A673 (cell line): ENCODE measurements at regions of chr12 and their contacts with region 1.

Region 1: GRCh38 chr12:94525951-94526350 is 66.3 kb upstream of the CEP83 start:
- DNase-seq: no peak
- H3K4me3 ChIP-seq: no peak overlapping the region
- H3K27ac ChIP-seq: no peak overlapping the region
- H3K4me1 ChIP-seq: no peaks in the 10 kb centered on the region
- H3K27me3 ChIP-seq: peaks cover 10% of the 10 kb centered on the region
- CTCF ChIP-seq: no peak

Region 2: GRCh38 chr12:94262228-94263010 is 263.5 kb before region 1 on chr12:
- CTCF ChIA-PET with region 1: no interaction called
- POLR2A ChIA-PET with region 1: no interaction called
- intact Hi-C with region 1: loop called (anchors 10 kb)
- DNase-seq: peak; percentile 93
- H3K4me3 ChIP-seq: peak overlapping the region; percentile 48
- H3K27ac ChIP-seq: peak overlapping the region; percentile 47
- H3K4me1 ChIP-seq: peaks cover 50% of the 10 kb centered on the region
- H3K27me3 ChIP-seq: peaks cover 7% of the 10 kb centered on the region
- CTCF ChIP-seq: no peak

Region 3: GRCh38 chr12:94674835-94675234 is 148.9 kb after region 1 on chr12:
- CTCF ChIA-PET with region 1: no interaction called
- POLR2A ChIA-PET with region 1: no interaction called
- intact Hi-C with region 1: no loop called
- DNase-seq: no peak
- H3K4me3 ChIP-seq: no peak overlapping the region
- H3K27ac ChIP-seq: no peak overlapping the region
- H3K4me1 ChIP-seq: no peaks in the 10 kb centered on the region
- H3K27me3 ChIP-seq: peaks cover 5% of the 10 kb centered on the region
- CTCF ChIP-seq: no peak